Activated naive CD4-positive, alpha-beta T cell treated with anti-CD3 and anti-CD28 coated beads for 36 hours (primary cell): ENCODE measurements at regions of chr1 and their contacts with region 1.

Region 1: DNA sequence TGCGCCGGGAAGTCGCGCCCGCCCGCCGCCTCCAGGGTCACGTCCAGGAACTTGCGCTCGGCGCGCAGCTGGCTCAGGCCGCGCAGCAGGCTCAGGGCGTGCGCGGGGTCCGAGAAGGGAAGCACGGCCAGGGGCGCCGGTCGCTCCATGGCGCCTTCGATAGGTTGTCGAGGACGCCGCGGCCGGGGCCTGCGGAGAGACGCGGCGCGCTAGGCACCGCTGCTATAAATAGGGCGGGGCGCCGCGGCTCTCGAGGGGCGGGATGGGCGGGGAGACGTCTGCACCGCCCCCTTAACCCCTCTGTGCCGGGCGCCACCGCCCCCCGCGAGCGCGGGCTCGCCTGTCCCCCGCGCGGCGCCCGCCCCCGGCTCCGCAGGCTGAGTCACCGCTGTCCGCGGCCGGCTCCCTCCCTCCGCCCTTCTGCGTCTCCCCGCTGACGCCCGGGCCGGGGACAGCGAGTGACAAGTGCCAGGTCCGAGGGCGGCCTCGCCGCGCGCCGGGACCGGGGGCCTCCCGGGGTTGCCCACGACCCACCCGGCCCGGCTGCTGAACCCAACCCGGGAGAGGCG is at the start of gene KLHL21:
- DNase-seq: peak; percentile 81
- H3K4me3 Mint-ChIP-seq: peak within 1 kb of the TSS; percentile 97
- H3K27ac Mint-ChIP-seq: peak within 1 kb of the TSS; percentile 96
- H3K4me1 Mint-ChIP-seq: peaks cover 35% of the 10 kb centered on the region
- H3K27me3 Mint-ChIP-seq: no peaks in the 10 kb centered on the region
- total RNA-seq, gene KLHL21: 21.0 to 23.3 TPM

Region 2: GRCh38 chr1:6199298-6200187 is 403.2 kb before region 1 on chr1 and contains the start of gene RPL22:
- CTCF ChIA-PET with region 1: no interaction called
- intact Hi-C with region 1: loop called (anchors 5 kb)
- DNase-seq: peak; percentile 99
- H3K4me3 Mint-ChIP-seq: peak within 1 kb of the TSS; percentile 91
- H3K27ac Mint-ChIP-seq: peak within 1 kb of the TSS; percentile 95
- H3K4me1 Mint-ChIP-seq: peaks cover 39% of the 10 kb centered on the region
- H3K27me3 Mint-ChIP-seq: no peaks in the 10 kb centered on the region
- total RNA-seq, gene RPL22: 507 to 553 TPM

Region 3: DNA sequence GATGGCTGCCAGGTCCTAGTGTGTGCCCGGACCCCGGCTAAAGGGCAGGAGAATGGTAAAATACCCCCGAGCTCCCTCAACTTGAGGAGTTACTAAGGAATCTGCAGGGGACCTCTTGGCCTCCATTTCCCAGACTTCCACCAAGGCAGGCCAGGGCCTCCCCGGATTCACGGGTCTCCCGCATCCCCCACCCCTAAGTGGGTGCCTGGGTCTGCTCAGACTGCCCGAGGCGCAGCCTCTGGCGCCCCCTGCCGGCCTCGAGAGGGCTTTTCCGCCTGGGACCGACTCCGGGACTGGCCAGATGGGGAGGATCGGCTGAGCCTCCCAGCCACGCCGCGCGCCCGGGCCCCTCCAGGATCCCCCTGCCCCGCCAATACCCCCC is 113.0 kb before region 1 on chr1:
- CTCF ChIA-PET with region 1: interaction called, 4 read pairs
- intact Hi-C with region 1: loop called (anchors 2 kb)
- DNase-seq: peak; percentile 87
- H3K4me3 Mint-ChIP-seq: peak overlapping the region; percentile 72
- H3K27ac Mint-ChIP-seq: peak overlapping the region; percentile 36
- H3K4me1 Mint-ChIP-seq: peaks cover 24% of the 10 kb centered on the region
- H3K27me3 Mint-ChIP-seq: peaks cover 10% of the 10 kb centered on the region

Region 4: DNA sequence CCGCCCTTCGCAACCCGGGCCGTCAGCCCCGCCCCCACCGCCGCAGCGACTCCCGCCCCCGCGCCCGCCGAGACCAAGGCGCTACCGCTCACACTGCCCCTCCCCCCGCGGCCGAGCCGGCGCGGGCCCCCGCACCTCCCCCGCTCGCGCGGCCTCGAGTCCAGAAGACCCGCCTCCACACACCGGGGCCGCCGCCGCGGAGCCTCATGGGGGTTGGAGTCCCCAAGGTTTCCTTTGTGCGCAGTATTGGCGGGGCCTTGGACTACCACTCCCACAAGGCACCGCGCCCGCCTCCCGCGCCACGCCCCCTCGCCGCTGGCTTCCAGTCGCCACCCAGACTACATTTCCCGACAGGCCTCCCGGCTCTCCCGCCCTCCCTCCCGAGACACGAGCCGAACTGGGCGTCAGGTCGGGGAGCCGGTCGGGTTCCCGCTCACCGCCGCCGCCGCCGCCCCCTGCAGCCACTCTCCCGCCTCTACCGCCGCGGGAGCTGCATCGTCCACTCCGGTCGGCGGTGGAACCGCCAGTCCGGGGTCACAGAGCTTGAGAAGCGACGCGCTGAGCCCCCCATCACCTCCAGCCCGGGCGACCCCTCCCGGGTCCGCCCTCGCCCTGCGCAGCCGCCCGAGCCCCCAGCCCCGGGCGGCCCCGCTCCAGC is 10.7 kb after region 1 on chr1 and contains the start of gene PHF13:
- CTCF ChIA-PET with region 1: interaction called, 3 read pairs
- intact Hi-C with region 1: loop called (anchors 1 kb)
- DNase-seq: peak; percentile 100
- H3K4me3 Mint-ChIP-seq: peak within 1 kb of the TSS; percentile 87
- H3K27ac Mint-ChIP-seq: peak within 1 kb of the TSS; percentile 81
- H3K4me1 Mint-ChIP-seq: peaks cover 17% of the 10 kb centered on the region
- H3K27me3 Mint-ChIP-seq: no peaks in the 10 kb centered on the region
- total RNA-seq, gene PHF13: 10.8 to 11.3 TPM

Region 5: DNA sequence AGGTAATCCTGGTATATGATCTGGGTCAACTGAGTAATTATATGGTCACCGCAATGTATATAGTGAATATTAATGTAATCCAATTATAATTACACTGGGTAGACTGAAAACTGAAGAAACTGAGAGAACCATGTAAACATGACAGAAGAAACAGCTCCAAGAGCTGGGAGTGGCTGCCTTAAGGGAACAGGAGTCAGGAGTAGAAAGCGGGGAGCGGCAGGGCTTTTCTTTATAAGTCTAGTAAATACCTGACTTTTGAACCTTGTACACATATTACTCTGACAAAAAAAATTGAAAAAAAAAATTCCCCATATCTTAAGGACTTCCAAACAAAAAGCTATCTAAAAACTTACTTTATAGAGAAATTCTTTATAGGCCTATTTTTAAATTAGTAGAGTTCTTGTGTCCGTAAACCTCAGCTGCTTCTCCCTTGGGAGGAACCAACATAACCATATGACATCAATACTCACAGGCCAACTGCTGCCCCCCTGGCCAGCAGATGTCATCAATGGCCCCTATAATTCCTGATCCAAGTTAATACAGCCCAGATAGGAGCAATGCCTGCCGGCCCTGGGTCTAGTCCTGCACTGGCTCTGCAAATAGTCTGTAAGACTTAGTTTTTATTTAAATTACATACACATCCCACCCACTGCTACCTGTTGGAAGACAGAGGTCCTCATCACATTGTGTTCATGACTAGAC is 55.8 kb after region 1 on chr1:
- CTCF ChIA-PET with region 1: no interaction called
- intact Hi-C with region 1: no loop called
- DNase-seq: no peak
- H3K4me3 Mint-ChIP-seq: no peak overlapping the region
- H3K27ac Mint-ChIP-seq: no peak overlapping the region
- H3K4me1 Mint-ChIP-seq: peaks cover 5% of the 10 kb centered on the region
- H3K27me3 Mint-ChIP-seq: no peaks in the 10 kb centered on the region

Region 6: DNA sequence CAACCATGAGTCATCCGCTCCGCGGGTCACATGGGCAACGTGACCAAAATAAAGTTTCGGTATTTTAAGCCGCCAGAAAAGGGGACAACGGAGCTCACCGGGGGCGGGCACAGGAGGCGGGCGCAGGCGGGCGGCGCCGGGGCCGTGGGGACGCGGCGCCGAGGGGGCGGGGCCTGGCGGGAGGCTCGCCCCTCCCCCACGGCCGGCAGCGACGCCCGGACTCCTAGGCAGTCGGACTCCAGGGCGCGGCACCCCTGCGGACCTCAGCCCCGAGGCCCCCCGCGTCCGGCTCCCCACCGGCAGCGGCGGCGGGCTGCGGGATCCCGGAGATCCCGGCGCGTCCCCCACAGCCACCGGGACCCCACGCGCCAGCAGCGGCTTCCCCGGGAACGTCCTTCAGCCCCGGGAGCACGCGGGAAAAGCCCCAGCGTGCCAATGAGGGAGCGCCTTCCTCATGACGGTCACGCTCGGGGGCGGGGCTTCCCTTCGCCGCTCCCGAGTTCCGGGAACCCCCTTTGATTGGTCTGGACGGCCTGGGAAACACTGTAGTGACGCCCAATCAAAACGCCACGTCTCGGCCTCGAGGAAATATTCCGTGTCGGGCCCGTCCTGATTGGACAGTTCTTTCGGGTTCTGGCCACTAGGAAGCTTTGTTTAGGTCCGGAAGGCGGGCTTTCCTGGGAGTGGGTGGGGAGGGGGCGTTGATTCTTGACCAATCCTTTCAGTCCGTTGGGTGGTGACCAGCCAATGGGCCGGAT is 182.0 kb after region 1 on chr1:
- CTCF ChIA-PET with region 1: no interaction called
- intact Hi-C with region 1: loop called (anchors 1 kb)
- DNase-seq: peak; percentile 100
- H3K4me3 Mint-ChIP-seq: peak overlapping the region; percentile 79
- H3K27ac Mint-ChIP-seq: peak overlapping the region; percentile 69
- H3K4me1 Mint-ChIP-seq: peaks cover 41% of the 10 kb centered on the region
- H3K27me3 Mint-ChIP-seq: no peaks in the 10 kb centered on the region